ENCODE measurements at regions of chr22 and their contacts with region 1.

Region 1: GRCh38 chr22:25110846-25111578 is 88.6 kb upstream of the CRYBB3 start:
- DNase-seq: peak; percentile 19 to 81 (median 55)
- ATAC-seq: peak; percentile 79
- H3K4me3 ChIP-seq: peak overlapping the region; percentile 66 to 70
- H3K4me3 Mint-ChIP-seq: peak overlapping the region; percentile 88
- H3K27ac ChIP-seq: peak overlapping the region; percentile 10 to 46
- H3K27ac Mint-ChIP-seq: peak overlapping the region; percentile 92
- H3K4me1 ChIP-seq: peaks cover 15% of the 10 kb centered on the region
- H3K4me1 Mint-ChIP-seq: peaks cover 40% of the 10 kb centered on the region
- H3K27me3 ChIP-seq: no peaks in the 10 kb centered on the region
- H3K27me3 Mint-ChIP-seq: no peaks in the 10 kb centered on the region
- CTCF ChIP-seq: peak; percentile 74

Region 2: DNA sequence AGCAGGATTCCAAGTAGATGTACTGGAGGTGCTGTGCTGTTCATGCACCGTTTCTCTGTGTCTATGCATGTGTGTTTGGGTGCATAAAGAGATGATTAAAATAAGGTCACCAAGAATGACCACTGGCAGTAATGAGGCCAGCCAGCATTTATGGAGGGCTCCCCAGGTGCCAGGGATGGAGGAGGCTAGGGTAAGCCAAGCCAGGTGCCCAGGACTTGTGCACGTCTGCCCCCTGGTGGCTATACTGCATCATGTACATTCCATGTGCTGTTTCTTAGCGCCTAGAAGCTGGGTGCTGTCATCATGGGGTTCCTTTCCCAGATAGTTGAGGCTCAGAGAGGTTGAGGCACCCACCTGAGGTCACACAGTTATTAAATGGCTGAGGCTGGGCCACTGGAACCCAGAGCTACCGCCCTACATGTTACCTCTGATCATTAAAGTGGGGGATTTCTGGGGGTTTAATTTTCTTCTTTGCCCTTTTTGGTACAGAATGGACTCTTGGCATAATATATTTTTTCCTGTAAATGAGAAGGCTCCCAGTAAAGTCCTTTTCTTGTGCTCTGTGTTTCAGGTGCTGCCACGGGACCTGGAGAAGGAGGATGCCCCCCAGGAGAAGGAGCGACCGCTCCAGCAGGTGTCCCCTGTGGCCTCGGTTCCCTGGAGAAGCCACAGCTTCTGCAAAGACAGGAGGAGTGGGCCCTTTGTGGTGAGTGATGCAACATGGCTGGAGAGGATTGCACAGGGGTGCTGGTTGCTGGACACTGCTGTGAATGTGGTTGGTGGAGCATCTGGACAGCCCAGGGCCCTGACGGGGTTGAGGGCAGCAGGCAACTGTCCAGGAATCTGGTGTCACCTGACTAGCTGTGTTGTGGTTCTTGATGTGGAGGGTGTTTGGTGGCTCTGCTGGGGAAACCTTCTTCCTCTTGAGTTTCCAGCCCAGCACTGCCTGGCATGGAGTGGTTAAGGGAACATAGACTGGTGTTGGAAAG is 62.1 kb before region 1 on chr22:
- CTCF ChIA-PET with region 1: interaction called, 10 read pairs
- POLR2A ChIA-PET with region 1: no interaction called
- intact Hi-C with region 1: no loop called
- DNase-seq: peak; percentile 41 to 83 (median 74)
- ATAC-seq: peak; percentile 96
- H3K4me3 ChIP-seq: no peak overlapping the region
- H3K4me3 Mint-ChIP-seq: no peak overlapping the region
- H3K27ac ChIP-seq: no peak overlapping the region
- H3K27ac Mint-ChIP-seq: no peak overlapping the region
- H3K4me1 ChIP-seq: no peaks in the 10 kb centered on the region
- H3K4me1 Mint-ChIP-seq: no peaks in the 10 kb centered on the region
- H3K27me3 ChIP-seq: no peaks in the 10 kb centered on the region
- H3K27me3 Mint-ChIP-seq: no peaks in the 10 kb centered on the region
- CTCF ChIP-seq: peak; percentile 78

Region 3: GRCh38 chr22:25062386-25063085 is 48.5 kb before region 1 on chr22:
- CTCF ChIA-PET with region 1: interaction called, 34 read pairs
- POLR2A ChIA-PET with region 1: interaction called, 22 read pairs
- intact Hi-C with region 1: loop called (anchors 1 kb)
- DNase-seq: peak; percentile 71 to 96 (median 85)
- ATAC-seq: peak; percentile 89
- H3K4me3 ChIP-seq: peak overlapping the region; percentile 38 to 39
- H3K4me3 Mint-ChIP-seq: peak overlapping the region; percentile 82
- H3K27ac ChIP-seq: peak overlapping the region; percentile 67 to 69
- H3K27ac Mint-ChIP-seq: peak overlapping the region; percentile 97
- H3K4me1 ChIP-seq: peaks cover 56% of the 10 kb centered on the region
- H3K4me1 Mint-ChIP-seq: peaks cover 70% of the 10 kb centered on the region
- H3K27me3 ChIP-seq: peaks cover 0 to 2% of the 10 kb centered on the region in 2 experiments
- H3K27me3 Mint-ChIP-seq: no peaks in the 10 kb centered on the region
- CTCF ChIP-seq: no peak

Region 4: GRCh38 chr22:25076336-25076735 is 34.7 kb before region 1 on chr22:
- CTCF ChIA-PET with region 1: interaction called, 31 read pairs
- POLR2A ChIA-PET with region 1: interaction called, 5 read pairs
- intact Hi-C with region 1: no loop called
- DNase-seq: peak in 5 of 9 experiments; percentile 17 to 81 (median 61)
- ATAC-seq: peak; percentile 60
- H3K4me3 ChIP-seq: peak overlapping the region in 1 of 2 experiments; percentile 10
- H3K4me3 Mint-ChIP-seq: peak overlapping the region; percentile 67
- H3K27ac ChIP-seq: peak overlapping the region in 1 of 2 experiments; percentile 57
- H3K27ac Mint-ChIP-seq: peak overlapping the region; percentile 91
- H3K4me1 ChIP-seq: peaks cover 35% of the 10 kb centered on the region
- H3K4me1 Mint-ChIP-seq: peaks cover 69% of the 10 kb centered on the region
- H3K27me3 ChIP-seq: no peaks in the 10 kb centered on the region
- H3K27me3 Mint-ChIP-seq: no peaks in the 10 kb centered on the region
- CTCF ChIP-seq: no peak

Region 5: GRCh38 chr22:25100948-25101347 is 10.1 kb before region 1 on chr22:
- CTCF ChIA-PET with region 1: interaction called, 20 read pairs
- POLR2A ChIA-PET with region 1: no interaction called
- intact Hi-C with region 1: no loop called
- DNase-seq: no peak
- ATAC-seq: no peak
- H3K4me3 ChIP-seq: no peak overlapping the region
- H3K4me3 Mint-ChIP-seq: no peak overlapping the region
- H3K27ac ChIP-seq: no peak overlapping the region
- H3K27ac Mint-ChIP-seq: no peak overlapping the region
- H3K4me1 ChIP-seq: no peaks in the 10 kb centered on the region
- H3K4me1 Mint-ChIP-seq: no peaks in the 10 kb centered on the region
- H3K27me3 ChIP-seq: no peaks in the 10 kb centered on the region
- H3K27me3 Mint-ChIP-seq: no peaks in the 10 kb centered on the region
- CTCF ChIP-seq: no peak

Region 6: DNA sequence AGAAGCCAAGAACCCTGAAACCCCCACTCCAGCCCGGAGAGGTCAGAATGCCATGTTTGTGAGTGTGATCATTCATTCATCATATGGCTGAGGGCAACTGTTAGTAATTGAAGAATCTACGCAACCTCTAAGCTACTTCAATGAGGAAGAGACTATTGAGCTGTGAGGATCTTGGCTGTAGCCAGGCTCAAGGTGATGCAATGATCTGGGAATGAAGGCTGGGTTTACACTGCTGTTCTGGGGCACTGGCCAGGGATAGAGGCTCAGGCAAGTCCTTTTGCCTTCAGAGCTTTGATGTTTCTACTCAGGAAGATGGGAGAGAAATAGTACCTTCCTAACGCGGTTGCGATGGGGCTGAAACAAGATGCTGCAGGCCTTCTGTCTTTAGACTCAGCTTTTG is 121.3 kb after region 1 on chr22:
- CTCF ChIA-PET with region 1: no interaction called
- POLR2A ChIA-PET with region 1: no interaction called
- intact Hi-C with region 1: no loop called
- DNase-seq: no peak
- ATAC-seq: no peak
- H3K4me3 ChIP-seq: no peak overlapping the region
- H3K4me3 Mint-ChIP-seq: no peak overlapping the region
- H3K27ac ChIP-seq: no peak overlapping the region
- H3K27ac Mint-ChIP-seq: no peak overlapping the region
- H3K4me1 ChIP-seq: peaks cover 5% of the 10 kb centered on the region
- H3K4me1 Mint-ChIP-seq: peaks cover 4% of the 10 kb centered on the region
- H3K27me3 ChIP-seq: no peaks in the 10 kb centered on the region
- H3K27me3 Mint-ChIP-seq: peaks cover 48% of the 10 kb centered on the region
- CTCF ChIP-seq: no peak